Common myeloid progenitor, CD34-positive (primary cell): ENCODE measurements at regions of chr20 and their contacts with region 1.

Region 1: DNA sequence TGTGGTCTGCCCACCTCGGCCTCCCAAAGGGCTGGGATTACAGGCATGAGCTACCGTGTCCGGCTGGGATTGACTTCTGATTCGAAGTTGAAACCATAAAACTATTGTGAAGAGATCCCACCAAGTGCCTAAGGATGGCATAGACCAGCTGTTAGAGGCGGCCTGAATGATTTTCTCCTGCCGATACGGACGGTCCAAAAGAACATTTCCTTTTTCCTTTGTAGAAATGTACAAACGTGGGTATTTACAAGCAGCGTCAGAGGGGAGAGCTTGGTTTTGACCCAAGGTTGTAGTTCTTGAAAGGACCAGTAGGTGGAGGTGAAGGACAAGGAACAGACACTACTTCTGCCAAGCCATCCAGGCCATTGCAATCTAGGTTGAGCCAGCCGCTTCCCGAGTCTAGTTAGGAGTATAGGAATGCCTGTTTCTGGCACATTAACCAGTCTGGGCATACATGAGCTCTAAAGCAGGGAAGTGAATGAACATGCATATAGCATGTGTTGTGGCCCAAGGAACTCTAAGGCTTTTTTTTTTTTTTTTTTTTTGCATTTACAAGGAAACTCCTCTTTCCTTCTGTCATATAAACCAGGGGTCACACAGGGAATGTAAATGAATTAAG is 29.1 kb downstream of the MOCS3 start:
- DNase-seq: peak; percentile 79 to 90 (median 82)
- H3K4me3 ChIP-seq: no peak overlapping the region
- H3K27ac ChIP-seq: no peak overlapping the region
- H3K4me1 ChIP-seq: no peaks in the 10 kb centered on the region
- H3K27me3 ChIP-seq: peaks cover 2 to 15% (median 8%) of the 10 kb centered on the region in 5 experiments

Region 2: GRCh38 chr20:51042654-51043247 is 55.0 kb after region 1 on chr20:
- CTCF ChIA-PET with region 1: no interaction called
- POLR2A ChIA-PET with region 1: no interaction called
- DNase-seq: no peak
- H3K4me3 ChIP-seq: no peak overlapping the region
- H3K27ac ChIP-seq: no peak overlapping the region
- H3K4me1 ChIP-seq: no peaks in the 10 kb centered on the region
- H3K27me3 ChIP-seq: peaks cover 0 to 17% (median 2%) of the 10 kb centered on the region in 5 experiments

Region 3: GRCh38 chr20:51311606-51312495 is 324.1 kb after region 1 on chr20:
- CTCF ChIA-PET with region 1: interaction called, 184 read pairs
- POLR2A ChIA-PET with region 1: interaction called, 4 read pairs
- DNase-seq: no peak
- H3K4me3 ChIP-seq: no peak overlapping the region
- H3K27ac ChIP-seq: no peak overlapping the region
- H3K4me1 ChIP-seq: no peaks in the 10 kb centered on the region
- H3K27me3 ChIP-seq: peaks cover 3 to 13% (median 9%) of the 10 kb centered on the region in 5 experiments

Region 4: DNA sequence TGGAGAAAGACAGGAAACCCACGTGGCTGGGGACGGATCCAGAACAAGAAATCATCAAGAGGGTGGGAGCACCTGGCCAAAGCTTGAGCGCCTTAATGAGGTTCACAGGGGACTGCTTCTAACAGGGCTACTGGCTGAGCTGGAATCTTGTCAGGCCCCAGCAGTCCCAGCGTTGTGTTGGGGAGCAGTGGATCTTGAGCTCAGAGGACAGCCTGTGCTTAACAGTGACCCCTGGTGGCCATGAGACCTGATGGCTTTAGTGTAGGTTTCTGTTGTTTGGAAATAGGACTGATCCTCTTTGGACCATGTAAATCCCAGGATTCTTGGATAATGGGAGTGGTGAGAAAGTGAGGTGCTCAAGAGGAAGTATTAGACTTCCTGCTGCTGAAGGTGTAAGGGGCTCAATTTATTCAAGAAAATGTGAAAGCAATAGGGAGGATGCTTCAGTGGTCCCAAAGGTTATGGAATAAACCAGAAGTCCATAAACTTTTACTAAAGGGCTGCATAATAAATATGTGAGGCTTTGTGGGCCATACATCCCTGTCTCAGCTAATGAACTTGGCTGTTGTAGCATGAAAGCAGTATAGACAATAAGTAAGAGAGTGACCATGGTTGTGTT is 338.6 kb after region 1 on chr20:
- CTCF ChIA-PET with region 1: interaction called, 66 read pairs
- POLR2A ChIA-PET with region 1: no interaction called
- DNase-seq: peak; percentile 30 to 66 (median 40)
- H3K4me3 ChIP-seq: no peak overlapping the region
- H3K27ac ChIP-seq: no peak overlapping the region
- H3K4me1 ChIP-seq: no peaks in the 10 kb centered on the region
- H3K27me3 ChIP-seq: peaks cover 0 to 3% (median 0%) of the 10 kb centered on the region in 5 experiments